Transverse colon (tissue), 4 donors: ENCODE measurements at regions of chr19 and their contacts with region 1.

Region 1: GRCh38 chr19:56066152-56067023 is 54.7 kb downstream of the ZNF787 start:
- DNase-seq: peak; percentile 71
- H3K4me3 ChIP-seq: no peak overlapping the region
- H3K27ac ChIP-seq: no peak overlapping the region
- H3K4me1 ChIP-seq: peaks cover 0 to 8% (median 3%) of the 10 kb centered on the region in 4 donors
- H3K27me3 ChIP-seq: peaks cover 4% of the 10 kb centered on the region
- CTCF ChIP-seq: peak; percentile 69 to 92 (median 82)
- EP300 ChIP-seq: no peak
- POLR2A ChIP-seq: no peak

Region 2: GRCh38 chr19:56170261-56170660 is 103.9 kb after region 1 on chr19:
- in situ Hi-C with region 1: loop called in 1 of 4 experiments (anchors 10 kb)
- intact Hi-C with region 1: loop called (anchors 2 kb)
- DNase-seq: no peak
- H3K4me3 ChIP-seq: no peak overlapping the region
- H3K27ac ChIP-seq: no peak overlapping the region
- H3K4me1 ChIP-seq: peaks cover 0 to 4% (median 2%) of the 10 kb centered on the region in 4 donors
- H3K27me3 ChIP-seq: peaks cover 21% of the 10 kb centered on the region
- CTCF ChIP-seq: no peak
- EP300 ChIP-seq: no peak
- POLR2A ChIP-seq: no peak

Region 3: GRCh38 chr19:56333505-56333904 is 267.1 kb after region 1 on chr19:
- in situ Hi-C with region 1: loop called in 1 of 4 experiments (anchors 25 kb)
- intact Hi-C with region 1: no loop called
- DNase-seq: peak; percentile 54
- H3K4me3 ChIP-seq: no peak overlapping the region
- H3K27ac ChIP-seq: no peak overlapping the region
- H3K4me1 ChIP-seq: peaks cover 0 to 3% (median 0%) of the 10 kb centered on the region in 4 donors
- H3K27me3 ChIP-seq: no peaks in the 10 kb centered on the region
- CTCF ChIP-seq: peak; percentile 49 to 73 (median 65)
- EP300 ChIP-seq: no peak
- POLR2A ChIP-seq: no peak